ENCODE measurements at regions of chr5 and their contacts with region 1.

Region 1: DNA sequence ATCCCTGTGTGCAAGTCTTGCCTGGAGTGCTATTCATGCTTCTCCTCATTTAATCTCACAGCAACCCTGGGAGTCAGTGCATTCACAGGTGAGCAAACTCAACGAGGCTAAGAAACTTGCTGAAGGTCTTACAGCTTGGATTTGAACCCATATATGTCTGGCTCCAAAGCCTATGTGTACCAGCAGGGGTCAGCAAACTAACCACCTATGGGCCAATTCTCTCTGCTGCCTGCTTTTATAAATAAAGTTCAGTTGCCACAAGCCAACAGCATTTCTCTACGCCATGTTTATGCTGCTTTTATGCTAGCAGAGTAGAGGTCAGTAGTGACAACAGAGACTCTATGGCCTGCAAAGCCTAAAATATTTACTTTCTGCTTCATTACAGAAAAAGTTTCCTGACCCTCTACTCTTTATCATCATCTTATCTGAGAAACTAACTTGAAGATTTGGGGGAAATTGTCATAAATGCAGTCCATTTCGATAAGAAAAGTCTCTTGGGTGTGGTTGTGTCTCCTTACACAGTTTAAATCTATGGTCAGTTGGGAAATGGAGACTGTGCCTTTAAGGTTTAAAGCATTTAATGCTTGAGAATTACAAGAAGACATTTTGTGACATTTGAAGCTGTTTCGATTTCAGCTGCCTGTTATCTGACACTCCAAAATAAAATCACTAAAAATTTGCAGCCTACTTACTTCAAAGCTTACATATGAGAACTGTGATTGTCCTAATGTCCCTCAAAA is 137.7 kb downstream of the PRELID2 start:
- DNase-seq: peak; percentile 51 to 71 (median 68)
- H3K4me3 ChIP-seq: no peak overlapping the region
- H3K27ac ChIP-seq: no peak overlapping the region
- H3K4me1 ChIP-seq: no peaks in the 10 kb centered on the region
- H3K27me3 ChIP-seq: no peaks in the 10 kb centered on the region

Region 2: GRCh38 chr5:145619806-145620310 is 77.6 kb before region 1 on chr5:
- CTCF ChIA-PET with region 1: no interaction called
- POLR2A ChIA-PET with region 1: no interaction called
- DNase-seq: no peak
- H3K4me3 ChIP-seq: no peak overlapping the region
- H3K27ac ChIP-seq: no peak overlapping the region
- H3K4me1 ChIP-seq: no peaks in the 10 kb centered on the region
- H3K27me3 ChIP-seq: no peaks in the 10 kb centered on the region

Region 3: DNA sequence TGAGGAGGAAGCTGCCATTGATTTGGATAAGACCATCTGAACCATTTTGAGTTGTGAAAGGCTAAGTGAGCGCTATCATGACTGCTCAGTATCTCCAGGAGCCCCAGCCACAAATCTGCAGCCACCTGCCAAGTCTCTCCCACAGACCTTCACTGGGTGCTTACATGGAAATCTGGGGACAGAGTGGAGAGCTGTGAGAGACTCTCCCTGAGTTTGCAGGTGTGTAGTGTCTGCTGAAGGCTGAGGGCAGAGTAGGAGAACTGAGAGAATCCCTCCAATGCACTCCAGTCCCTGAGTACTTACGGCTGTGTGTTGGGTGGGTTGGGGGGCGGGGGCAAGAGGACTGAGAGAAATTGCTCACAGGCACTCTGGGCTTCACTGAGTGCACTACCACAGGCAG is 14.0 kb after region 1 on chr5:
- CTCF ChIA-PET with region 1: interaction called, 21 read pairs
- POLR2A ChIA-PET with region 1: no interaction called
- DNase-seq: no peak
- H3K4me3 ChIP-seq: no peak overlapping the region
- H3K27ac ChIP-seq: no peak overlapping the region
- H3K4me1 ChIP-seq: no peaks in the 10 kb centered on the region
- H3K27me3 ChIP-seq: no peaks in the 10 kb centered on the region

Region 4: DNA sequence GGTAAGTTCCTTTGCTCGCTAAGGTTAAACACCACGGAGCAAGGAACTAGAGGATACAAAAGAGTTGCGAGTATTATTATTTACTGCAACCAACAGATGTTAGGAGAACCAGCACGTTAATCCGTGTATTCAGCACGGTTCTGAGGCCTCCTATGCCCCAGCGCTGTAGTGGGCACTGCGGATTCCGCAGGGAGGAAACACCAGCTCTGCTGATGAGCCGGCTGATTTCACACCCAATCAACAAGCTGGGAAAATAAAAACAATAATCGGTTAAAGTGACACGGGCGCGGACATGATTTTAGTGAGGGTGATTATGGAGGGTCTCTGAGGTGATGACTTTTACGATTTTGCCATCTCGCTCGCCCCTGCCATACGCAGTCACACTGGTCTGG is 138.4 kb after region 1 on chr5:
- CTCF ChIA-PET with region 1: no interaction called
- POLR2A ChIA-PET with region 1: no interaction called
- DNase-seq: no peak
- H3K4me3 ChIP-seq: peak overlapping the region; percentile 66 to 93 (median 81)
- H3K27ac ChIP-seq: peak overlapping the region in 1 of 2 experiments; percentile 80
- H3K4me1 ChIP-seq: peaks cover 10 to 32% (median 26%) of the 10 kb centered on the region in 4 experiments
- H3K27me3 ChIP-seq: no peaks in the 10 kb centered on the region

Measured in common myeloid progenitor, CD34-positive (primary cell).